Mammary epithelial cell (primary cell): ENCODE measurements at regions of chrX and their contacts with region 1.

Region 1: DNA sequence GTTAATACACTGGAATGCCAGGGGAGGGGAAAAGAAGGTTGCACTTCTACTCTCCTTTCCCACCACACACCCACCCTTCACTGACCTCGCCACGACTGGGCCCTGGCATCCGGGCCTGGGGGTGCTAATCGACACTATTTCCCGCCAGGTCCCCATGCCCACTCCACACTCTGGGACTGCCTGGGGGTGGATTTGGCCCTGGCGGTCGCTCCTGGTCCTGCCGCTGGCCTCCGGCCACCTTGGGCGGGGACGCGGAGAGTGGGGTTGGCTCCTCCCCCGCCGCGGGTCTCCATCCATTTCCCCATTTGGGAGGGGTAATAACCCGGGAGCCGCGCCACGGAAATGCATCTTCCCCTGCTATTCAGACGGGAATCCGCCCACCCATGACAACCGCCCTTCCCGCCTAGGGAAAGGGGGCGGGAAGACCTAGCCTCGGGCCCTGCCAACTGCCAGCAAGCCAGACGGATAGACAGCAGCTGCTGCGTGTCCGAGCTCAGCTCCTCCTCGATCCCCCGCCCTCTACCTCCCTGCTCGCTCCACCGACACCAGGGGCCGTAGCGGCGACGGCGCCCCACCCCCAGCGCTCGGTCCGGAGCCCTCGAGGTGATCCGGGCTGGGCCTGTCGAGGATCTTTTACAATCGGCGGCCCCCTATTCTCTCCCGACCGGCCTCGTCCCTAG is 78.1 kb downstream of the RLIM start:
- DNase-seq: peak; percentile 47
- H3K4me3 ChIP-seq: peak overlapping the region; percentile 27 to 42 (median 37)
- H3K27ac ChIP-seq: no peak overlapping the region
- H3K4me1 ChIP-seq: peaks cover 23% of the 10 kb centered on the region
- H3K27me3 ChIP-seq: no peaks in the 10 kb centered on the region
- CTCF ChIP-seq: peak; percentile 2 to 25

Region 2: DNA sequence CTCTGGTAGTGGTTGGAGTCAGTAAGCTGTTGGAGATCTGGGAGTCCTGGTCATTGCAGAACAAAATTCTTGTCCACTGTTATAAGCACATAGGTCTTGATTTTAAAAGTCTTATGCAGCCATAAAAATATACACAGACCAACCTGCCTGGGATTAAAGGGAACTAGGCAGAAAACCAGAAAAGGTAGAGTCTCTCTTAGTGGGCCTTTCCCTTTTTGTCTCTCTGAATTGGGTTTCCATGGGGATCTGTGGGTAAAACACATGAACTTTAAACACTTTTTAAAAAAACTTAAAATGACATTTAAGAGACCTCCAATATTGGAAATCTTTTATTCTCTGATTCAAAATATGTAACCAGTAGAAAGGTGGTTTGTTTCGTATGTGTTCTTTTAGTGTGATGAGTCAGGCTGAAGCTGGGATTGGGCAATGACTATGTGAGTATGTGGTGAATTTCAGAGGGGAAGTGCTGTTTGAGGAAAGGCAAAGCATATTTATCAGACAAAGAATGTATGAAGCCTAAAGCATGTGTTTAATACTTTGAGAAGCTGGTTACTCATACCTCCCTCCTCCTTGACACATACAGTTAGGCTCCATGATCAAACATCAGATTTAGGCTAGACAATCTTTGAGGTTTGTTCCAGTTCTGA is 85.4 kb before region 1 on chrX:
- CTCF ChIA-PET with region 1: no interaction called
- dilution Hi-C with region 1: no loop called
- in situ Hi-C with region 1: no loop called
- intact Hi-C with region 1: loop called (anchors 5 kb)
- DNase-seq: peak; percentile 90
- H3K4me3 ChIP-seq: no peak overlapping the region
- H3K27ac ChIP-seq: peak overlapping the region; percentile 84
- H3K4me1 ChIP-seq: peaks cover 51% of the 10 kb centered on the region
- H3K27me3 ChIP-seq: no peaks in the 10 kb centered on the region
- CTCF ChIP-seq: no peak